Activated T-helper 1 cell treated with anti-CD3 and anti-CD28 coated beads, Interleukin-12 subunit alpha, Interleukin-12 subunit beta, Interleukin-2, Interleukin-4 antibody, amounts not matched to agents 30 ng/mL and 10 ng/mL and 1 ng/mL, durations not matched to agents 14 hours and 24 hours and 36 hours (primary cell): ENCODE measurements at regions of chrX and their contacts with region 1.

Region 1: GRCh38 chrX:46686003-46686645 is 72.8 kb downstream of the SLC9A7 start:
- DNase-seq: peak; percentile 4
- H3K4me3 Mint-ChIP-seq: no peak overlapping the region
- H3K27ac Mint-ChIP-seq: no peak overlapping the region
- H3K4me1 Mint-ChIP-seq: peaks cover 38% of the 10 kb centered on the region
- H3K27me3 Mint-ChIP-seq: no peaks in the 10 kb centered on the region

Region 2: GRCh38 chrX:46381630-46382029 is 304.5 kb before region 1 on chrX:
- intact Hi-C with region 1: loop called (anchors 2 kb)
- DNase-seq: peak; percentile 0
- H3K4me3 Mint-ChIP-seq: no peak overlapping the region
- H3K27ac Mint-ChIP-seq: no peak overlapping the region
- H3K4me1 Mint-ChIP-seq: no peaks in the 10 kb centered on the region
- H3K27me3 Mint-ChIP-seq: peaks cover 3% of the 10 kb centered on the region

Region 3: GRCh38 chrX:46554942-46555341 is 131.2 kb before region 1 on chrX:
- intact Hi-C with region 1: loop called (anchors 2 kb)
- DNase-seq: no peak
- H3K4me3 Mint-ChIP-seq: no peak overlapping the region
- H3K27ac Mint-ChIP-seq: no peak overlapping the region
- H3K4me1 Mint-ChIP-seq: no peaks in the 10 kb centered on the region
- H3K27me3 Mint-ChIP-seq: no peaks in the 10 kb centered on the region

Region 4: GRCh38 chrX:46642145-46642544 is 44.0 kb before region 1 on chrX:
- intact Hi-C with region 1: loop called (anchors 5 kb)
- DNase-seq: no peak
- H3K4me3 Mint-ChIP-seq: no peak overlapping the region
- H3K27ac Mint-ChIP-seq: no peak overlapping the region
- H3K4me1 Mint-ChIP-seq: peaks cover 32% of the 10 kb centered on the region
- H3K27me3 Mint-ChIP-seq: no peaks in the 10 kb centered on the region

Region 5: DNA sequence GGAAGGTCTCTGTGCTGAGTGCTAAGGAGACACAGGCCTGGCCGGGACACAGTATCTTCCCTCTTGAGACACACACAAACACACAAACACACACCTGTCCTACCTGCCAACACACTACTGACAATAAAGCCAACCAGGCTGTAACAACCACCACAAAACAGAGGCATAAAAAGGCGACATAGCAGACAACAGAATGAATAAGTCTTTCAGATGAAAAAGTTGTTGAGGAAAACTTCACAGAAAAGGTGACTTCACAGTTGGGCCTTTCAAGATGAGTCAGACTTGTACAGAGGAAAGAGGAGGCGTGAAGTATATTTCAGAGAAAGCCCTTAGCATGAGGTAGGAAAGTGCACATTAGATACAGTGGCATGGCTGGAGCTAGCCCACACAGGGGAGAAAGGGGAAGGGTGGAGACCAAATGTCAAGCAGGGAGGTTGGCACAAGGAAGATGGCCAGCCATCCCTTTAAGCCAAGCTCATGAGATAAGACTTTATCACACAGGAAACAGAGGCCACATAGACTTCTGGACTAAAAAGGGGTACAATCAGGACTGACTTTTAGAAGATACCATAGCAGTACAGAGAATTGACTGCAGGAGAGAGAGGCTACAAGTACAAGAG is 18.8 kb after region 1 on chrX:
- intact Hi-C with region 1: loop called (anchors 2 kb)
- DNase-seq: peak; percentile 32
- H3K4me3 Mint-ChIP-seq: peak overlapping the region; percentile 64
- H3K27ac Mint-ChIP-seq: peak overlapping the region; percentile 88
- H3K4me1 Mint-ChIP-seq: peaks cover 58% of the 10 kb centered on the region
- H3K27me3 Mint-ChIP-seq: no peaks in the 10 kb centered on the region